HAP-1 (cell line): ENCODE measurements at regions of chr10 and their contacts with region 1.

Region 1: GRCh38 chr10:114703377-114704107 is 45.5 kb upstream of the ABLIM1 start:
- DNase-seq: peak; percentile 32 to 53
- H3K4me3 ChIP-seq: no peak overlapping the region
- H3K4me1 ChIP-seq: no peaks in the 10 kb centered on the region
- H3K27me3 ChIP-seq: peaks cover 31% of the 10 kb centered on the region

Region 2: DNA sequence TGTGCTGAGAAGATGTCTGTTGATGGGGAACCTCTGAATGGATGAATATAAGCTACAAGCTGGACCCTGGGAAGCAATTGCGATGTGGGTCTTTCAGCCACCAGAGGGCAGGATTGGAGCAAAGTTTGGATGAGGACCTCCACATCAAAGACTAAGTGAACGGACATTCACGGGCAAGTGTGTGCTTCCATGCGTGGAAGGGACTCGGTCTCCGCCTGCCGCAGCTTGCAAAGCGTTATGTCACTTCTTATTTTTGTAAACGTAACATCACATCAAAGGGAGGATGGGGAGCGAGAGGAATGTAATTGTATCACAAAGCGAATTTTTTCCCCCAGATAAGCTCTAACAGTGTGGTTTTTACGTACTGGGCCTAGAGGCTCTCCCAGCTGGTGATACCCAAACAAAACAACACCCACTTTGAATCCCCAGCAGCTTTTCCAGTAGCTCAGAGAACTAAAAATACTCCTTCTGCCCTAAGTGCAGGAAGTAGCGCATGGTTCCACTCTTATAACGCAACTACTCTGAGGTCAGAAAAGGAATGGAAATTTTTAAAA is 399.4 kb before region 1 on chr10:
- in situ Hi-C with region 1: loop called (anchors 25 kb)
- DNase-seq: peak; percentile 75 to 87
- H3K4me3 ChIP-seq: peak overlapping the region; percentile 25
- H3K4me1 ChIP-seq: peaks cover 4% of the 10 kb centered on the region; the same call in 1 of the 2 replicates
- H3K27me3 ChIP-seq: no peaks in the 10 kb centered on the region